ENCODE measurements at regions of chr3 and their contacts with region 1.

Region 1: DNA sequence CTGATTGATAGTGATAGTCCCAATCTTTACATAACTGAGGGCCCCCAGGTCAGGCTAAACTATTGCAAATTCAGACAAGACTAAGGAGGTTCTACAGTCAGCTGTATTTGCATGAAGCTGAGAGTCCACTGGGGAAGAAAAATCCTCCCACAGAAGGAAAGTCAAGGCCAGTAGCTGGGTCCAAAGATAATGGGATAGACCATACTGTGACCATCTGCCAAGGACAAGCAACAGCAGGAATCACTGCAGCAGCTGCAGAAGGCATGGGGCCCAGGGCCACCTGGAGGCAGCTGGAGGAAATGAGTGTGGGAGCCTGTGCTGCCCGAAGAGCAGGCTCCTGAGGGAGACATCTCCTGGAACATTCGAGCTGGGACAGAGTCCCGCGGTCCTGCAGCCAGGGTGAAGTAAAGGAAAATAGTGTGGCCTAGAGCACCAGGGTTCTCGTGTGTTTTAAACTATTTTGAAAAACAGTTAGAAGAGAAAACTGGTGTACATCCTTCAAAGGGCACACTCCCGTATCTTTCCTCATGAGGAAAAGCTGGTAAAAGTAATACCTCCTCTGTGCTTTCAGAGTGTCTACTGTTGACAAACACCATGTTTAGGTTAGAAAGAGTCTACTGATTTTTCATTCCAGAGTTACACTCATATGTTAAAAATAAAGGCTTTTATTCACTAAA is 13.2 kb upstream of the TMEM212 start:
- DNase-seq: peak in 2 of 9 experiments; percentile 15 to 18
- ATAC-seq: no peak
- H3K4me3 ChIP-seq: no peak overlapping the region
- H3K4me3 Mint-ChIP-seq: no peak overlapping the region
- H3K27ac ChIP-seq: no peak overlapping the region
- H3K27ac Mint-ChIP-seq: no peak overlapping the region
- H3K4me1 ChIP-seq: no peaks in the 10 kb centered on the region
- H3K4me1 Mint-ChIP-seq: peaks cover 2% of the 10 kb centered on the region
- H3K27me3 ChIP-seq: no peaks in the 10 kb centered on the region
- H3K27me3 Mint-ChIP-seq: peaks cover 11% of the 10 kb centered on the region
- CTCF ChIP-seq: no peak

Region 2: GRCh38 chr3:171703756-171704401 is 126.1 kb before region 1 on chr3:
- CTCF ChIA-PET with region 1: no interaction called
- POLR2A ChIA-PET with region 1: no interaction called
- intact Hi-C with region 1: loop called in 1 of 2 experiments (anchors 10 kb)
- DNase-seq: peak in 3 of 9 experiments; percentile 5 to 42 (median 42)
- ATAC-seq: no peak
- H3K4me3 ChIP-seq: no peak overlapping the region
- H3K4me3 Mint-ChIP-seq: no peak overlapping the region
- H3K27ac ChIP-seq: no peak overlapping the region
- H3K27ac Mint-ChIP-seq: no peak overlapping the region
- H3K4me1 ChIP-seq: no peaks in the 10 kb centered on the region
- H3K4me1 Mint-ChIP-seq: no peaks in the 10 kb centered on the region
- H3K27me3 ChIP-seq: no peaks in the 10 kb centered on the region
- H3K27me3 Mint-ChIP-seq: peaks cover 9% of the 10 kb centered on the region
- CTCF ChIP-seq: no peak

Measured in CD8-positive, alpha-beta T cell (primary cell).